Gastrocnemius medialis (tissue), 4 donors: ENCODE measurements at regions of chr3 and their contacts with region 1.

Region 1: DNA sequence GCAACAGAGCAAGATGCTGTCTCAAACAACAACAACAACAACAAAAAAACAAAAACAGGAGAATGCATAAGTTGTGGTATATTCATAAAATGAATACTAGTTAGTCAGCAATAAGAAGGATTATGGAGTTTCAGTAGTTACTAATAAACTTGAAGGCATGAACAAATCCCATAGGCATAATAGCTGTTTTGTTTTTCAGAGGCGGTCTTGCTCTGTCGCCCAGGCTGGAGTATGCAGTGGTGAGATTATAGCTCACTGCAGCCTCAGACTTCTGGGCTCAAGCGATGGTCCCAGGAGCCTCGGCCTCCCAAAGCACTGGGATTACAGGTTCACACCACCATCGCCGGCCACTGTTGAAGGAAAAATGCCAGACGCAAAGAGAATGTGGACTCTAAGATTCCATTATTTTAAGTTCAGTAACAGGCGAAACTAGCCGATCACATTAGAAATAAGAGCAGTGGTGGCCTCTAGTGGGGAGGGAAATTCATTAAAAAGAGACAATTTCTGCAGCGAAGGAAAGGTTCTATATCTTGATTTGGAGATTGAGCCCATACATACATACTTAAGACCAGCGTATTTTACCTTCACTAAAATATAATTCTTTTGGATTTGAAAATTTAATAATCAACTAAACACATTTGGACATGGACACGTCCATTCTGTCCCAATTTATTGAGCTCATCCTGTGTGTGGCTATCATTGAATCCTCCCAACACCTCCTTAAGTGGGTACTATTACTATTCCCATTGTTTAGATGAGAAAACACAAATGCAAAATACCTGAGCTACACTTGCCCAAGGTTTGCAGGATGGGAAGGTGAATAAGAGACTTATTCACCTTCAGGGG is 27.4 kb upstream of the HDAC11 start:
- DNase-seq: no peak
- ATAC-seq: peak; percentile 37
- H3K4me3 ChIP-seq: peak overlapping the region; percentile 56 to 71 (median 65)
- H3K27ac ChIP-seq: peak overlapping the region; percentile 77 to 92 (median 85)
- H3K4me1 ChIP-seq: peaks cover 9 to 12% of the 10 kb centered on the region in 2 donors
- H3K27me3 ChIP-seq: no peaks in the 10 kb centered on the region
- CTCF ChIP-seq: peak; percentile 26 to 61 (median 40)
- POLR2A ChIP-seq: no peak

Region 2: DNA sequence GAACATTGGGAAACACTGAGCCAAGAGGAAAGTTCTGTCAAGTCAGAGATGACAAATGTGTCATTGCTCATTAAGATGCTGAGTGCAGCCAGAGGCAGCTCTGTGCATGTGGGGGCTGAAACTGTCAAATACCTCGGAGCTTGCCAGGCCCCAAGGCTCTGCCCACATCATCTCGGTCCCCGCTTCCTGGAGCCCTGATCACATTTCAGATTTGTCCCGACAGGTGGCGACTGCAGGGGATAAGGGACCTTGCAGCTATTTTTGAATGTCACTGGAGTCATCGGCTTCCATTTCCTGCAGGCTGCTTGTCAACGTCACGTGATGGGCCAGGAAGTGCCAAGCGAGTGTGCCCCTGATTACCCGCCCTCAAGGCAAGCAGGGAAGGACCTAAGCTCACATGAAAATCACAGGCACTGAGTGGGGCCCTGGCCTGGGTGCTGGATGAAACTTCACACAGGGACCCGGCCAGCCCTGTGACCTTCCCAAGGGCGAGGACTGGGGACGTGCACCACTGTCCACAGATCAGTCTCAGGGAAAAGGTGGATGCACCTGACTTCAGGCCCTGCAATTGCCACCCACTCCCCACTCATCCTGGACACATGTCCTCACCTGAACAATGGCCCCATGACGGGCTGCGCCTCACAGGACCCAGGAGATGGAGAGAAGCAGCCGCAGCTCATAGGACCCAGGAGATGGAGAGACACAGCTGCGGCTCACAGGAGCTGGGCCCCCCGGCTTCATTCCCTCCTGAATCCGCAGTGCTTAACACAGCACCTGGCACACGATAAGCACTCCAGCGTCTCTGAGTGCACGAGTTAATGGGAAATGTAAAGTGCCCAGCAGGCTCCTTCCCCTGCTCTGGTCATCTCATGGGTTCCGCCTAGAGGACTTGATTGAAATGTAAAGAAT is 106.0 kb before region 1 on chr3:
- in situ Hi-C with region 1: no loop called
- intact Hi-C with region 1: loop called (anchors 1 kb)
- DNase-seq: peak; percentile 19 to 35
- ATAC-seq: peak; percentile 60 to 67
- H3K4me3 ChIP-seq: no peak overlapping the region
- H3K27ac ChIP-seq: peak overlapping the region in 2 of 4 donors; percentile 53 to 55
- H3K4me1 ChIP-seq: peaks cover 0 to 5% of the 10 kb centered on the region in 2 donors
- H3K27me3 ChIP-seq: no peaks in the 10 kb centered on the region
- CTCF ChIP-seq: peak in 1 of 5 experiments; percentile 19
- POLR2A ChIP-seq: no peak

Region 3: GRCh38 chr3:13419505-13420044 is 33.1 kb before region 1 on chr3:
- in situ Hi-C with region 1: no loop called
- intact Hi-C with region 1: loop called (anchors 1 kb)
- DNase-seq: peak in 1 of 2 donors; percentile 22
- ATAC-seq: peak; percentile 72 to 80
- H3K4me3 ChIP-seq: peak overlapping the region; percentile 52 to 58 (median 54)
- H3K27ac ChIP-seq: peak overlapping the region; percentile 58 to 73 (median 68)
- H3K4me1 ChIP-seq: peaks cover 0 to 15% of the 10 kb centered on the region in 2 donors
- H3K27me3 ChIP-seq: no peaks in the 10 kb centered on the region
- CTCF ChIP-seq: peak in 1 of 5 experiments; percentile 17
- POLR2A ChIP-seq: no peak

Region 4: GRCh38 chr3:13537921-13538320 is 85.2 kb after region 1 on chr3:
- in situ Hi-C with region 1: no loop called
- intact Hi-C with region 1: no loop called
- DNase-seq: peak in 1 of 2 donors; percentile 48
- ATAC-seq: peak; percentile 43 to 60
- H3K4me3 ChIP-seq: no peak overlapping the region
- H3K27ac ChIP-seq: peak overlapping the region; percentile 27 to 52 (median 41)
- H3K4me1 ChIP-seq: peaks cover 0 to 3% of the 10 kb centered on the region in 2 donors
- H3K27me3 ChIP-seq: no peaks in the 10 kb centered on the region
- CTCF ChIP-seq: no peak
- POLR2A ChIP-seq: no peak